CD4-positive, alpha-beta T cell (primary cell): ENCODE measurements at regions of chr1 and their contacts with region 1.

Region 1: GRCh38 chr1:26111530-26112406 is at the start of gene PDIK1L:
- DNase-seq: peak; percentile 91 to 99 (median 95)
- ATAC-seq: peak; percentile 86
- H3K4me3 ChIP-seq: peak within 1 kb of the TSS; percentile 99
- H3K4me3 Mint-ChIP-seq: peak within 1 kb of the TSS; percentile 96
- H3K27ac ChIP-seq: peak within 1 kb of the TSS; percentile 34 to 73
- H3K27ac Mint-ChIP-seq: peak within 1 kb of the TSS; percentile 92
- H3K4me1 ChIP-seq: peaks cover 24% of the 10 kb centered on the region
- H3K4me1 Mint-ChIP-seq: peaks cover 38% of the 10 kb centered on the region
- H3K27me3 ChIP-seq: no peaks in the 10 kb centered on the region
- H3K27me3 Mint-ChIP-seq: no peaks in the 10 kb centered on the region
- CTCF ChIP-seq: no peak
- total RNA-seq, gene PDIK1L: 9.5 to 9.9 TPM

Region 2: DNA sequence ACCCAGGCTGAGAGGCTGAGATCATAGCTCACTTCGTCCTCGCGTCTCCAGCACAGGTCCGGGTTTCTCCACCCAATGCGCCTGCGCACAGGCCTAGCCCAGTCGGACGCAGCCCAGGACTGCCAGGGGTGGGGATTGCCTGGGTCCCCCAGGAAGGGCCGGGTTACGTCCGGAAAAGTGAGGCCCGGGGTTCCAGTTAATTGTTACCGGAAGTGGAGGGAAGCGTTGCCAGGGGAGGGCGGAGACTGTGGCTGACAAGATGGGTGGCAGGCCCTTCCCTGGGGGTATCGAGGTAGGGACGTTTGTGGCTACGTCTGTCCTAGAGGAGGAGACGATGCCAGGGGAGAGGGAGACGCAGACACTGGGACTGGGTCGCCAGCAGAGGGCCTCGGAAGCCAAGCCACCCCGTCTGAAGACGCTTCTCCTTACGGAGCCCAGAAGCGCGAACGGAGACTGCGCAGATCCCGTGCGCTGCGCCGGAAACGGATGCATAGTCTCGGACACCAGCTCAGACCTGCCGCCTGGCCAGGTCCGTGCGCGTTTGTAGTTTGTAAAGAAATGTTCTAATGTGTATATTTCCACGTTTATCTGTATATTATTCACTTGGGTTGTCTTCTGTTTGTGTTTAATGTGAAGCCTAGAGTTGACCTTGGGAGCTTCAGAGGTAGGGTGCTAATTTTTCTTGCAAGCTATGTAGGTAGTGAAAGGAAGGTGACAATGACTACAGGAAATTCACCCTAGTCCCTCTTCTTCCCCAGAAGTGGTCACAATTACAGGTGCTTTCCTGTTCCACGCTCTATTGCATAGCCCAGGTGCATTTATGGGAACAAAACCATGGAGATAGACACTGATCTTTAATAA is 871.9 kb before region 1 on chr1:
- CTCF ChIA-PET with region 1: no interaction called
- POLR2A ChIA-PET with region 1: no interaction called
- intact Hi-C with region 1: loop called in 1 of 2 experiments (anchors 10 kb)
- DNase-seq: peak; percentile 64 to 94 (median 78)
- ATAC-seq: peak; percentile 86
- H3K4me3 ChIP-seq: peak overlapping the region; percentile 61
- H3K4me3 Mint-ChIP-seq: peak overlapping the region; percentile 90
- H3K27ac ChIP-seq: peak overlapping the region; percentile 79 to 89
- H3K27ac Mint-ChIP-seq: peak overlapping the region; percentile 99
- H3K4me1 ChIP-seq: peaks cover 38% of the 10 kb centered on the region
- H3K4me1 Mint-ChIP-seq: peaks cover 62% of the 10 kb centered on the region
- H3K27me3 ChIP-seq: no peaks in the 10 kb centered on the region
- H3K27me3 Mint-ChIP-seq: no peaks in the 10 kb centered on the region
- CTCF ChIP-seq: peak; percentile 69

Region 3: DNA sequence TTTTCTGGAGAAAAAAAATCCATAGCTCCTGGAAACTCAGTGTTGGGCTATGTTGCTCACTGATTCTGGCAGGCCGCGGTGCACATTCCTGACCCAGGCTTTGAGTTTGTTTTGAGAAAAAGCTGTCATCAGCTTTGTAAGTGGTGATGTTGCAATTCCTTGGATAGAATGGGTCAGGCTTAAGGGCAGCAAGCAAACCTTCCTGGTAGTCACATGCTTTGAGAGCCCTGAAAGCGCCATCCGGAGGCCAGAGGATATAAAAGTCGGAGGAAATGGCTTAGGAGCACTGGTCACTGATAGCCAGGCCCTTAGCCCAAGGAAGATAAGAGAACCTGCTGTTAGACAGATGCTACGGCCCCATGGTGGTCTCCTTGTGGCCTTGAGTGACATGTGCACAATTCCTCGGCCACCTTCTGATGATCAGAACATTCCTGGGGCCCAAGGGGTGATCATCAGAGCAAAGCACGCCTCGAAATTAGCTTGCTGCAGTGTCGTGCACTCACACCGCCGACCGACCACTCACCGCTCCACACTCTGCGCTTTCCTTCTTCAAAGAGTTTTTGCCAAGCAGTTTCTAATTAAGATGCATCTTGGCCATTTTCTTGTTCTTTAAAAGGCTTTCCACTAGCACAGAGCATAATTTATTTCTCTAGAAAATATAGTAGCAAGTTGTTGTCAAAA is 416.5 kb before region 1 on chr1:
- CTCF ChIA-PET with region 1: no interaction called
- POLR2A ChIA-PET with region 1: no interaction called
- intact Hi-C with region 1: no loop called
- DNase-seq: no peak
- ATAC-seq: no peak
- H3K4me3 ChIP-seq: no peak overlapping the region
- H3K4me3 Mint-ChIP-seq: no peak overlapping the region
- H3K27ac ChIP-seq: peak overlapping the region in 1 of 2 donors; percentile 39
- H3K27ac Mint-ChIP-seq: peak overlapping the region; percentile 74
- H3K4me1 ChIP-seq: peaks cover 48% of the 10 kb centered on the region
- H3K4me1 Mint-ChIP-seq: peaks cover 73% of the 10 kb centered on the region
- H3K27me3 ChIP-seq: no peaks in the 10 kb centered on the region
- H3K27me3 Mint-ChIP-seq: no peaks in the 10 kb centered on the region
- CTCF ChIP-seq: no peak